CD8-positive, alpha-beta T cell (primary cell): ENCODE measurements at regions of chr17 and their contacts with region 1.

Region 1: DNA sequence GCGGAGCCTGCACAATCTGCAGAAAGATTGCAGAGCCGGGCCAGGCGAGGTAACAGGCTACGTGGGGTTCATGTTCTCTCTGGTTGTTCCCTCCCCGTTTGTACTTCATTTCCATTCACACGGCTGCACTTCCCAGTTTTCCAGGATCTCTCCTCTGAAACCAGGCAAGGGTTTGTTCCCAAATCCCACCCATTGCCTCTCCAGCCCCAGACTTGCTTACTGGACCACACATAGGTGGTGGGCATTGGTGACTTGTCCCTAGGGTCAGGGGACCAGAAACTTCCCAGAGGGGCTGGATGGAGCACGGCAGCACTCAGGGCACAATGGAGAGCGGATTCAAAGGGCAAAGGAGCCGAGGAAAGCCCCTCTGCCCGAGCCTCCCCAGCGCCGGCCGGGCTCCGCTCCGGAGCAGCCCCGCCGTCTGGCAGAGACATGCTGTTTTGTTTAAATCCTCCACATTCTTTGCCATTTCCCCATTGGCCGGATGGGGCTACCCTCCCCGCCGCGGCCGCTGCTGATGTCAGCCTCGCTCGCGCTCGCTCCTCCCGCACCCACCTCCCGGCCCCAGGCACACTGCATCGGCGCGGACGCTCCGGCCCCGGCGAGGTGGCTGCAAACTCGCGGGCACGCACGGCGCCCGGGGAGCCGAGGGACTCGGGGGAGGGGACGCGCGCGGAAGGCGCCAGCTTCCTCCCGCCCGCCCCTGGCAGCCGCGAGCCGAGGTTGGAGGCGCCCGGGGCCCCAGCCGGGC is at the start of gene PITPNC1:
- DNase-seq: peak; percentile 72 to 95 (median 88)
- ATAC-seq: peak; percentile 70
- H3K4me3 ChIP-seq: peak within 1 kb of the TSS; percentile 94 to 97
- H3K4me3 Mint-ChIP-seq: peak within 1 kb of the TSS; percentile 95
- H3K27ac ChIP-seq: peak within 1 kb of the TSS; percentile 81 to 87
- H3K27ac Mint-ChIP-seq: peak within 1 kb of the TSS; percentile 94
- H3K4me1 ChIP-seq: peaks cover 41% of the 10 kb centered on the region
- H3K4me1 Mint-ChIP-seq: peaks cover 46% of the 10 kb centered on the region
- H3K27me3 ChIP-seq: no peaks in the 10 kb centered on the region
- H3K27me3 Mint-ChIP-seq: no peaks in the 10 kb centered on the region
- CTCF ChIP-seq: no peak
- total RNA-seq, gene PITPNC1: 110 to 111 TPM

Region 2: DNA sequence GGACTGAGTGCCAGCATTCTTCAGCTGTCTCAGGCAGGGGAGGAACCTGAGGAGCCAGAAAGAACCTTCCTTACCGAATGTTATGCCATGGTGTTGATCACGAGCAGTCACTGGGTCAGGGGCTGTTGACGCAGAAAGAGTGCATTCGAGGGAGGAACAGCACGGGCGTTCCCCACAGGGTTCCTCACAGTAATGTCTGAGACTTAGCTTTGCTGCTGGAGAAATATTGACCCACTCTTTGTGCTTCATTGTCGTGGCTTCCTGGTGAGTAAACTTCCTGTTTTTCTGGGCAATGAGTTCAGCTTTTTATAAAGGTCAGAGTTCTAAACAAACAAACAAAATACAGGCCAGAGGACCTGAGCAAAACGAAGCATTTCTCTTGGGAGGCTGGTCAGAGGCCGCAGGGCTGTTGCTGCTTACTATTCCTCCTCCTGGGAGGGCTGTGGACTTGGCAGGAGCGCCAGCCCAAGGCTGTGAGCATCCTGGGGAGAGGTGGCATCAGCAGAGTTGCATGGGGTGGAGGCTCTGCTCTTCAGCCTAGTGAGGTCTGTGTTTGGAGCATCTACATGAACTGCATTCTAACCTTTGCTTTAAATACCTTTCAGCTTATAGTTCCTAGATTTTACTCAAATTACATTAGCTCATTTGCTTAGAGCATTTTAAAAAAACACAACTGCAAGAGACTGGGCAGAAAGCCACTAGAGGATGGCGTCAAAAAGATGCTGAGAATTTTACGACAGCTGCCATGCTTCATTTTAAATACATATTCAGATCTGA is 685.1 kb before region 1 on chr17:
- CTCF ChIA-PET with region 1: no interaction called
- POLR2A ChIA-PET with region 1: no interaction called
- intact Hi-C with region 1: no loop called
- DNase-seq: peak in 4 of 9 experiments; percentile 17 to 37 (median 32)
- ATAC-seq: peak; percentile 42
- H3K4me3 ChIP-seq: no peak overlapping the region
- H3K4me3 Mint-ChIP-seq: peak overlapping the region; percentile 23
- H3K27ac ChIP-seq: peak overlapping the region in 1 of 2 experiments; percentile 23
- H3K27ac Mint-ChIP-seq: peak overlapping the region; percentile 74
- H3K4me1 ChIP-seq: no peaks in the 10 kb centered on the region
- H3K4me1 Mint-ChIP-seq: peaks cover 13% of the 10 kb centered on the region
- H3K27me3 ChIP-seq: no peaks in the 10 kb centered on the region
- H3K27me3 Mint-ChIP-seq: no peaks in the 10 kb centered on the region
- CTCF ChIP-seq: no peak

Region 3: GRCh38 chr17:67183531-67183930 is 193.4 kb before region 1 on chr17:
- CTCF ChIA-PET with region 1: no interaction called
- POLR2A ChIA-PET with region 1: no interaction called
- intact Hi-C with region 1: no loop called
- DNase-seq: no peak
- ATAC-seq: no peak
- H3K4me3 ChIP-seq: no peak overlapping the region
- H3K4me3 Mint-ChIP-seq: no peak overlapping the region
- H3K27ac ChIP-seq: no peak overlapping the region
- H3K27ac Mint-ChIP-seq: no peak overlapping the region
- H3K4me1 ChIP-seq: no peaks in the 10 kb centered on the region
- H3K4me1 Mint-ChIP-seq: no peaks in the 10 kb centered on the region
- H3K27me3 ChIP-seq: no peaks in the 10 kb centered on the region
- H3K27me3 Mint-ChIP-seq: no peaks in the 10 kb centered on the region
- CTCF ChIP-seq: no peak

Region 4: GRCh38 chr17:67297454-67297960 is 79.4 kb before region 1 on chr17:
- CTCF ChIA-PET with region 1: no interaction called
- POLR2A ChIA-PET with region 1: no interaction called
- intact Hi-C with region 1: no loop called
- DNase-seq: no peak
- ATAC-seq: no peak
- H3K4me3 ChIP-seq: no peak overlapping the region
- H3K4me3 Mint-ChIP-seq: no peak overlapping the region
- H3K27ac ChIP-seq: no peak overlapping the region
- H3K27ac Mint-ChIP-seq: no peak overlapping the region
- H3K4me1 ChIP-seq: no peaks in the 10 kb centered on the region
- H3K4me1 Mint-ChIP-seq: peaks cover 3% of the 10 kb centered on the region
- H3K27me3 ChIP-seq: no peaks in the 10 kb centered on the region
- H3K27me3 Mint-ChIP-seq: no peaks in the 10 kb centered on the region
- CTCF ChIP-seq: no peak

Region 5: DNA sequence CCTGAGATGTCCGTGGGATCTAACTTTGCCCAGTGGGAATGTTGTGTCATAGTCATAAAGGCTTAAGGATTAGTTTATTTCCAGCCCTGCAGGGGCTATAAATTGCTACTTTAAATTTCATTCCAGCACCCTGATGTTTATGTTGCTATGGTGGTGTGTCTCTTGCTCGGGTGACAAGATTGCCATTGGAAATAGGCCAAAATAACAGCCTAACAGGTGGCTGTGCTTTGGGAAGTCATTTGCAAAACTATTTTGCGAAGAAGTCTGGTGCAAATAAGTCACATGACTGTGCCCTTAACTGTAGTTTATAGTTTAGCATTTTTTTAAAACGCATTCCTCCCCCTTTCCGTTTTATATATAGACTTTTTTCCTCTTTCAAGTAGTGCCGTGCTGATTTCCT is 23.3 kb after region 1 on chr17:
- CTCF ChIA-PET with region 1: interaction called, 9 read pairs
- POLR2A ChIA-PET with region 1: interaction called, 3 read pairs
- intact Hi-C with region 1: loop called in 1 of 2 experiments (anchors 1 kb)
- DNase-seq: peak in 2 of 9 experiments; percentile 55 to 81
- ATAC-seq: peak; percentile 24
- H3K4me3 ChIP-seq: peak overlapping the region in 1 of 2 experiments; percentile 8
- H3K4me3 Mint-ChIP-seq: peak overlapping the region; percentile 71
- H3K27ac ChIP-seq: peak overlapping the region; percentile 39 to 78
- H3K27ac Mint-ChIP-seq: peak overlapping the region; percentile 92
- H3K4me1 ChIP-seq: peaks cover 76% of the 10 kb centered on the region
- H3K4me1 Mint-ChIP-seq: peaks cover 82% of the 10 kb centered on the region
- H3K27me3 ChIP-seq: no peaks in the 10 kb centered on the region
- H3K27me3 Mint-ChIP-seq: no peaks in the 10 kb centered on the region
- CTCF ChIP-seq: no peak

Region 6: DNA sequence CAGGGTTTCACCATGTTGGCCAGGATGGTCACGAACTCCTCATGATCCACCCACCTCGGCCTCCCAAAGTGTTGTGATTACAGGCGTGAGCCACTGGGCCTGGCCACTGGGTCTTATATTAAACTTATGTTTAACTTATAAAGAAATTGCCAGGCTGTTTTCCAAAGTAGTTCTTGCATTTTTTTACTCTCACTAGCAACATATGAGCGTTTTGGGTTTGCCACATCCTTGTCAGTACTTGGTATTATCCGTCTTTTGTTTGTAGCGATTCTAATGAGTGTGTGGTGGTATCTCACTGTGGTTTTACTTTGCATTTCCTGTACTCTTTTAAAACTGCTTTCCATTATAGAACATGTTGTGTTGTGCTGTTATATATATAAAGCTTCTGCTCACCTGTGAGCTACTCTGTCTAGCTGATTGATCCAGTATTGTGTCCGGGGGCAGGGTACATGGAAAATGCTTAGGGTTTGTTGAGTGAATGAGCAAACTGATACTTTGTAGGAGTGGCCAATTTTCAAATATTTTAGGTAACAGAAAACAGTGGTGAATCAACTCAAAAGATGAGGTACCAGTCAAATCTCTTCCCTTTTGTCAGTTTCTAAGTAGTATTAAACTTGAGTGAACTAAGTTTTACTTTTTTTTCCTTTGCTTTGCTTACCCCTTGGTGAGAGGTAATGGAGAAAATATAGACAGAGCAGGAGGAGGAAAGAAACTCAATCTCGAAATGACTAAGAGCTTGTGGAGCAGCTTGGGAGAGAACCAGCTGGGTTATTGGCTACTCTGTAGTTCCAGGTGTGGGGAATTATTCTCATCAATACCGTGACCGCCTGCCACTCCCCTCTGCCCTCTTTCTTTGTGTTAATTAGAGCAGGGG is 76.0 kb after region 1 on chr17:
- CTCF ChIA-PET with region 1: interaction called, 17 read pairs
- POLR2A ChIA-PET with region 1: interaction called, 7 read pairs
- intact Hi-C with region 1: no loop called
- DNase-seq: peak in 4 of 9 experiments; percentile 50 to 89 (median 66)
- ATAC-seq: peak; percentile 79
- H3K4me3 ChIP-seq: peak overlapping the region in 1 of 2 experiments; percentile 15
- H3K4me3 Mint-ChIP-seq: peak overlapping the region; percentile 77
- H3K27ac ChIP-seq: peak overlapping the region; percentile 59 to 72
- H3K27ac Mint-ChIP-seq: peak overlapping the region; percentile 97
- H3K4me1 ChIP-seq: peaks cover 91% of the 10 kb centered on the region
- H3K4me1 Mint-ChIP-seq: peaks cover 93% of the 10 kb centered on the region
- H3K27me3 ChIP-seq: no peaks in the 10 kb centered on the region
- H3K27me3 Mint-ChIP-seq: no peaks in the 10 kb centered on the region
- CTCF ChIP-seq: no peak

Region 7: DNA sequence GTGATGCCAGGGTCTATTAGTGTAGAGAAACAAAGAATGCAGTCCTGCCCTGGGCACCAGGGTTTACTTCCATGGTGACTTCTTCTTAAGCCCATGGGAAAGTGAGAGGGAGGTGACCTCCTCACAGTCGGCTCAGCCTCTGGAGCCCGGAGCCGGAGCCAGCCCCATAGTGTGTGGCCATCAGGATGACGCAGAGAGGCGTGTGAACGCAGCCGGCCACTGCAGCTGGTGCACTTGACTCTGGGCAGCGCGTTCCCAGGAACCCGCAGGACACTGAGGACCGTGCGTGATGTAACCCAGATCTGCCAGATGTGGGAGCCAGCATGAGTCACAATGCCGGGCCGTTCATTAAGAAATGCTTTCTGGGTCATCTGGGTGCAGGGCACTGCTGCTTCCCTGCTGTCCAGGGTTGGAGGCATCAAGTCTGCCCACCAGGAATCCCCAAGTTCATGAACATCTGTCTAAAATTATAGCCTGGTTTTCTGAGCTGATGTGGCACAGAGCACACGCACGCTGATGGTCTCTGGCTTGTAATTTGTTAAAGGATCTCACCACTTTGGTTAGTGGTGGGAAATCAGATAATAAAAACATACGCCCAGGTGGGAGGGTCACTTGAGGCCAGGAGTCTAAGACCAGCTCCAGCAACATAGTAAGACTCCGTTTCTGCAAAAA is 114.2 kb after region 1 on chr17:
- CTCF ChIA-PET with region 1: interaction called, 502 read pairs
- POLR2A ChIA-PET with region 1: interaction called, 7 read pairs
- intact Hi-C with region 1: no loop called
- DNase-seq: peak in 3 of 9 experiments; percentile 40 to 63 (median 42)
- ATAC-seq: no peak
- H3K4me3 ChIP-seq: no peak overlapping the region
- H3K4me3 Mint-ChIP-seq: peak overlapping the region; percentile 49
- H3K27ac ChIP-seq: peak overlapping the region in 1 of 2 experiments; percentile 32
- H3K27ac Mint-ChIP-seq: peak overlapping the region; percentile 76
- H3K4me1 ChIP-seq: peaks cover 46% of the 10 kb centered on the region
- H3K4me1 Mint-ChIP-seq: peaks cover 86% of the 10 kb centered on the region
- H3K27me3 ChIP-seq: no peaks in the 10 kb centered on the region
- H3K27me3 Mint-ChIP-seq: no peaks in the 10 kb centered on the region
- CTCF ChIP-seq: no peak

Region 8: GRCh38 chr17:67594115-67594880 is 217.4 kb after region 1 on chr17:
- CTCF ChIA-PET with region 1: interaction called, 19 read pairs
- POLR2A ChIA-PET with region 1: interaction called, 6 read pairs
- intact Hi-C with region 1: no loop called
- DNase-seq: no peak
- ATAC-seq: no peak
- H3K4me3 ChIP-seq: no peak overlapping the region
- H3K4me3 Mint-ChIP-seq: no peak overlapping the region
- H3K27ac ChIP-seq: no peak overlapping the region
- H3K27ac Mint-ChIP-seq: peak overlapping the region; percentile 49
- H3K4me1 ChIP-seq: no peaks in the 10 kb centered on the region
- H3K4me1 Mint-ChIP-seq: peaks cover 32% of the 10 kb centered on the region
- H3K27me3 ChIP-seq: no peaks in the 10 kb centered on the region
- H3K27me3 Mint-ChIP-seq: no peaks in the 10 kb centered on the region
- CTCF ChIP-seq: no peak

Region 9: GRCh38 chr17:67717624-67718329 is 340.9 kb after region 1 on chr17 and contains the start of gene NOL11:
- CTCF ChIA-PET with region 1: interaction called, 5 read pairs
- POLR2A ChIA-PET with region 1: no interaction called
- intact Hi-C with region 1: loop called in 1 of 2 experiments (anchors 1 kb)
- DNase-seq: peak; percentile 99 to 100 (median 99)
- ATAC-seq: peak; percentile 94
- H3K4me3 ChIP-seq: peak within 1 kb of the TSS; percentile 93 to 98
- H3K4me3 Mint-ChIP-seq: peak within 1 kb of the TSS; percentile 99
- H3K27ac ChIP-seq: peak within 1 kb of the TSS; percentile 90 to 96
- H3K27ac Mint-ChIP-seq: peak within 1 kb of the TSS; percentile 99
- H3K4me1 ChIP-seq: peaks cover 20% of the 10 kb centered on the region
- H3K4me1 Mint-ChIP-seq: peaks cover 32% of the 10 kb centered on the region
- H3K27me3 ChIP-seq: no peaks in the 10 kb centered on the region
- H3K27me3 Mint-ChIP-seq: peaks cover 5% of the 10 kb centered on the region
- CTCF ChIP-seq: peak; percentile 72
- total RNA-seq, gene NOL11: 91.0 to 94.0 TPM